K562 (cell line): ENCODE measurements at regions of chr1 and their contacts with region 1.

Region 1: DNA sequence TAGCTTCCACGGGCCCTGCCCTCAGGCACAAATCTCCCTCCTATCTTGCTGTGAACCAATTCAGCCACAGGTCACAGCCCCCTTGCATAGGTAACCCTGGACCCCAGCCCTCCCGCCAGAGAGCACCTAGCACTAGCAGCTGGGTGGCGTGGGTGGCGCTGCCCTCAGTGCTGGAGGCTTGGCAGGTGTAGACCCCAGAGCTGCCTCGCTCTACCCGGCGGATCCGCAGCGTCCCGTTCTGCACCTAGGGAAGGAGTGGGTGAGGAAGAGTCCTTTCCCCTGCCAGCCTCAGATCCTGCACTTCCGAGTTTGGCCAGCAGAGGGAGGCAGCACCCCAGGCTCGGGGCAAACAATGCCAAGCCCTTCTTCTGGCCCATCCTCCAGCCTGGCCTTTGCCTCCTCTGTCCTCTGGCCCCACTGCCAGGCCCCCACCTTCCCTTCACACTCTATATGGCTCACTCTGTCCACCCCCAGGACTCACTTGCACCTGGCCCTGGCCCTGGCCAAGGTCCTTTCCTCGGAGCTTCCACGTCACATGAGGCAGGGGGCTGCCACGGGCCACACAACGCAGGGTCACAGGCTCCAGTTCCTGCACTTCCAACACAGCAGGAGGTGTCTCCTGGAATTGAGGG is 9.0 kb downstream of the IGSF9 start:
- DNase-seq: peak; percentile 68 to 84 (median 82)
- ATAC-seq: peak; percentile 89
- H3K4me3 ChIP-seq: no peak overlapping the region
- H3K27ac ChIP-seq: no peak overlapping the region
- H3K4me1 ChIP-seq: peaks cover 4 to 22% of the 10 kb centered on the region in 2 experiments; a peak in 4 of 5 replicates
- H3K27me3 ChIP-seq: peaks cover 11 to 55% of the 10 kb centered on the region in 2 experiments
- CTCF ChIP-seq: peak; percentile 93 to 95 (median 94)
- EP300 ChIP-seq: no peak
- POLR2A ChIP-seq: no peak
- RAD21 ChIP-seq: peak; percentile 92 to 93

Region 2: GRCh38 chr1:159798893-159799292 is 137.5 kb before region 1 on chr1:
- CTCF ChIA-PET with region 1: no interaction called
- POLR2A ChIA-PET with region 1: no interaction called
- in situ Hi-C with region 1: no loop called
- intact Hi-C with region 1: loop called (anchors 5 kb)
- DNase-seq: peak; percentile 66 to 67 (median 66)
- ATAC-seq: peak; percentile 94
- H3K4me3 ChIP-seq: no peak overlapping the region
- H3K27ac ChIP-seq: no peak overlapping the region
- H3K4me1 ChIP-seq: no peaks in the 10 kb centered on the region
- H3K27me3 ChIP-seq: peaks cover 27 to 37% of the 10 kb centered on the region in 2 experiments
- CTCF ChIP-seq: peak; percentile 75 to 87 (median 76)
- EP300 ChIP-seq: no peak
- POLR2A ChIP-seq: no peak
- RAD21 ChIP-seq: peak; percentile 75 to 89

Region 3: DNA sequence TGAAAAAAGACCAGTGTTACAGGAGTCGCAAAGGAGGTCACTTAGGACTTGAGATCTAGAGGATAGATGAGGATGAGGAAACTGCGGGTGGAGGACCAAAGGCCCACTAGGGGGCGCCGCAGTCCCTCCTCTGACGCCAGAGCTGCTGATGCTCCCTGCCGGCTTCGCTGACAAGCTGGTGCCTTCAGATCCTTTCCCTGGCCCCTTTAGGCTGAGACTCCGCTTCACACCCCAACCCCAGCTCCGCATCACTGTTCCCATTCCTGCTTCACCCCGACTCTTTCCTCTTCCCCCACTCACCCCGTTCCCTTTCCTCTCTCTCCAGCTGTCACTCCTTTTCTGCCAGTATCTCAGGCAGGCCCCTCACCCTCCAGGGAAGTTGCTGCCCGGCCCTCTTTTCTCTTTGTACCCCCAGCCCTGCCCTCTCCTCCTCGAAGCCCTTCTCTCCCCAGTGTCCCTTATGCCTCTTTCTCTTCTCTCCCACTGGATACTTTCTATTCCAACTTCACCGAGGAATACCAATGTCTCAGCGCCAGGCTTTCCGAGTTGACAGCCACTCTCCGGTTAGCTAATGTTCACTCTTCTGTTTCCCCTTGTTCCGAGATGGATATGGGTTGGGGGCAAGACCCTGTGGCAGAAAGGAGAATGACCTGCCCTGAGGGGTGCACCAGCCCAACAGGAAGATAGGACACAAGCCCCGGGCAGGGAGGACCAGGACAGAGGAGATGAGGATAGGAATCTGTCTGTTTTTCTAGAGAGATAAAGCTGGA is 149.5 kb after region 1 on chr1:
- CTCF ChIA-PET with region 1: interaction called, 4 read pairs
- POLR2A ChIA-PET with region 1: no interaction called
- in situ Hi-C with region 1: no loop called
- intact Hi-C with region 1: loop called (anchors 5 kb)
- DNase-seq: peak; percentile 86 to 90 (median 88)
- ATAC-seq: peak; percentile 97
- H3K4me3 ChIP-seq: no peak overlapping the region
- H3K27ac ChIP-seq: no peak overlapping the region
- H3K4me1 ChIP-seq: peaks cover 0 to 16% of the 10 kb centered on the region in 2 experiments; a peak in 1 of 5 replicates
- H3K27me3 ChIP-seq: peaks cover 4 to 18% of the 10 kb centered on the region in 2 experiments; a peak in 3 of 5 replicates
- CTCF ChIP-seq: peak; percentile 95 to 97 (median 96)
- EP300 ChIP-seq: no peak
- POLR2A ChIP-seq: no peak
- RAD21 ChIP-seq: peak; percentile 71 to 84